Stomach (tissue), 19 donors: ENCODE measurements at regions of chr1 and their contacts with region 1.

Region 1: GRCh38 chr1:153563483-153563901 is 2.2 kb downstream of the S100A2 start:
- DNase-seq: no peak
- H3K4me3 ChIP-seq: no peak overlapping the region
- H3K27ac ChIP-seq: no peak overlapping the region
- H3K4me1 ChIP-seq: peaks cover 33% of the 10 kb centered on the region in 4 donors
- H3K27me3 ChIP-seq: no peaks in the 10 kb centered on the region
- CTCF ChIP-seq: no peak
- EP300 ChIP-seq: no peak
- POLR2A ChIP-seq: no peak

Region 2: DNA sequence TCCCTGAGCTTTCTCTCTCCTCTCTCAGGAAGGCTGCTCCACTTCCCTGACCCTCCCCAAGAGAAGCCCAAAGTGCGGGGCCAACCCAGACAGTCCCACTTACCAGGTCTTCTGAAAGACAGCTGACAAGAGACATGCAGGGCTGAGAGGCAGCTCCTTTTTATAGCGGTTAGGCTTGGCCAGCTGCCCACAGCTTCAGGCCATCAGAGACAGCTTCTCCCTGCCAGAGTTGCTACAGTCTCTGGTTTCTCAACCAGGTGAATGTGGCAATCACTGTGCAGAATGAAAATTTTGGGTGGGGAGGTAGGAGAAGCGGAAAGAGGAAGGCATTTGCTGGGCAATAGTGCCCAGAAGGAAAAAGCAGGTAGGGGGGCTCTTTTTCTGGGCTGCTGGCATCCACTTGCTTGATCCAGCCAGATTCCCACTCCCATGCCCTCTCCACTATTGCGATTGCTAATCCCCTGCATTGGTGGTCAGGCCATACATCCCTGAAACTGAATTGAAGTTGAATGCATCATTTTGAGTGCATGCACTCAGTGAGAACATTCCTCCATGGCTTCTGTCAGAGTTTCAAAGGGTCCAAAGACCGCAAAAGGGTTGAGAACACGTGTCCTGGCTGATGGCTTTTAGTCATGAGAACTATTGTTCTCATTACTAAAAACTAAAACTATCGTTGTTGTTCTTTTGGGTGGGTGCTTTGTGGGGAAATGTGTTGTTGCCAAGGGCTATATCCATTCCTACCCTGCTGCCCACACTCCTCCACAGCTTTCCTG is 172.4 kb before region 1 on chr1 and contains the start of gene S100A8:
- intact Hi-C with region 1: no loop called
- DNase-seq: peak in 1 of 2 donors; percentile 48
- H3K4me3 ChIP-seq: peak within 1 kb of the TSS in 2 of 4 donors; percentile 29 to 36
- H3K27ac ChIP-seq: peak within 1 kb of the TSS in 2 of 5 donors; percentile 64 to 67
- H3K4me1 ChIP-seq: no peaks in the 10 kb centered on the region
- H3K27me3 ChIP-seq: peaks cover 0 to 52% (median 18%) of the 10 kb centered on the region in 3 donors
- CTCF ChIP-seq: no peak
- EP300 ChIP-seq: no peak
- POLR2A ChIP-seq: no peak
- total RNA-seq, gene S100A8: 16.8 to 86.4 (median 38.1) TPM in 4 of 5 donors, not detected in the other

Region 3: GRCh38 chr1:153510984-153511410 is 52.5 kb before region 1 on chr1:
- intact Hi-C with region 1: loop called (anchors 5 kb)
- DNase-seq: peak; percentile 86 to 93
- H3K4me3 ChIP-seq: no peak overlapping the region
- H3K27ac ChIP-seq: peak overlapping the region in 1 of 5 donors; percentile 36
- H3K4me1 ChIP-seq: peaks cover 13 to 38% (median 22%) of the 10 kb centered on the region in 4 donors
- H3K27me3 ChIP-seq: no peaks in the 10 kb centered on the region
- CTCF ChIP-seq: peak in 5 of 7 experiments; percentile 71 to 93 (median 90)
- EP300 ChIP-seq: no peak
- POLR2A ChIP-seq: no peak

Region 4: DNA sequence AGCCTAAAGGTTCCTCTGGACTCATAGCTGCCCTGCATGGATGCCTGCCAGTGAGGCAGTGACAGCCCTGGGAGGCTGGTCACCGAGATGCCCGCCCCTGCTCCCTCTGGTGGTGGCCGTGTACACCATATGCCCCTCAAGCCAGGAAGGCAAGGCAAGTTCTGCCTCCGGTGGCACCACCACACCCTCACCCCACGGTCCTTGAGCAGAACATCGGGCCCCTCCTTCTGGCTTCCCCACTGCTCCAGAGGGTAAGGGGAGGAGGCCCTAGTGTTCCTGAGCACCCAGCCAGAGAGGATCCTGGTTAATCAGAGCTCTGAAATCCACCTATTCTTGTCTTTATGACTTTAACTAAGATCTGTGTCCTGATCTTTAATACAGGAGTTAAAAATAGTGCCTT is 54.2 kb after region 1 on chr1:
- intact Hi-C with region 1: no loop called
- DNase-seq: peak; percentile 85 to 91
- H3K4me3 ChIP-seq: no peak overlapping the region
- H3K27ac ChIP-seq: peak overlapping the region in 4 of 5 donors; percentile 46 to 89 (median 67)
- H3K4me1 ChIP-seq: peaks cover 28 to 53% (median 42%) of the 10 kb centered on the region in 4 donors
- H3K27me3 ChIP-seq: no peaks in the 10 kb centered on the region
- CTCF ChIP-seq: peak in 5 of 7 experiments; percentile 18 to 81 (median 59)
- EP300 ChIP-seq: no peak
- POLR2A ChIP-seq: no peak